AG04449 (cell line): ENCODE measurements at regions of chr11 and their contacts with region 1.

Region 1: GRCh38 chr11:33687733-33688479 is 12.7 kb downstream of the C11orf91 start:
- DNase-seq: no peak
- H3K4me3 ChIP-seq: no peak overlapping the region
- CTCF ChIP-seq: peak; percentile 63

Region 2: GRCh38 chr11:33161120-33162005 is 526.5 kb before region 1 on chr11 and contains the start of gene CSTF3:
- CTCF ChIA-PET with region 1: interaction called, 53 read pairs
- POLR2A ChIA-PET with region 1: interaction called, 3 read pairs
- DNase-seq: peak; percentile 80
- H3K4me3 ChIP-seq: peak within 1 kb of the TSS; percentile 96
- CTCF ChIP-seq: peak; percentile 50

Region 3: DNA sequence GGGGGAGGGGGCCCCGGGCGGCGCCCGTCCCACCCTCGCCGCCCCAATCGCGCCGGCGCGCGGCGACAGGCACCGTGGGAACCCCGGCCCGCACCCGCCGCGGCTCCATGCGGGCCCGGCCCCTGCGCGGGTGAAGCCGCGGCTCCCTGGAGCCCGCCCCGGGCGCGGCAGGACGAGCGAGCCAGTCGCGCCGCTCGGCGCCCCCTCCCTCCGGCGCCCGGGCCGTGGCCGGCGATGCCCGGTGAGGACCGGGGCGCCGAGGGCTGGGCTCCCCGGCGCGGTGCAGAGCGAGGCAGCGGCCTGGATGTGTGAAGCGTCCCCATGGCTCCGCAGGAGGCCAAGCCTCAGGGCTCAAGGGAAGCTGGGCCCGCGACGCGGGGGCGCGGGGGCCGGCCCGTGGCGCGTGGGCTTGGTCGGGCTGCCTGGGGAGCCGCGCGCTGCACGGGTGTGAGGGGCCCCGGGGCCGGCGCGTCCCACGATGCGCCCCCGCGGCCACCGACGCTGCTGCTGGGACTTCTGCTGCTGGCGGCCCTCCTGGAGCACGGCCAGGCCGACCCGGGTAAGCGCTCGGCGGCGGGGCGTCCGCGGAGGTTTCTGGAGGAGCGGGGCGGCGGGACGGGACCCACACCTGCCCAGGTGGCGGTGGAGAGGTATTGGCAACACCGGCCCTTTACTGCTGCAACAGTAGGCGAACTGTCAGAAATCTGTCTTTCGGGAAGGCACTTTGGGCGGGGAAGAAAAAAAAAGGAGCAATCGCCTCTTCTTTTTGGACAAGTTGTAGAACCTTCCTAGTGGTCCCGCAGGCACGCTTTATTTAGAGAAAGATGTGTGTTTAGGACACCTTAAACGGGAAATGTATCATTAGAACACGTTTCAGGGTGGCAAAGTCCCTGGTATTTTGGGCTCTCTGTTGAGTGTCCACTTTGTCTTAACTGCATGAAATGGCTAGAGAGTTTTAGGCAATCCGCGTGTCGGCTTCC is 311.3 kb before region 1 on chr11:
- CTCF ChIA-PET with region 1: interaction called, 20 read pairs
- POLR2A ChIA-PET with region 1: interaction called, 5 read pairs
- DNase-seq: no peak
- H3K4me3 ChIP-seq: peak overlapping the region; percentile 70
- CTCF ChIP-seq: no peak

Region 4: GRCh38 chr11:33670250-33671011 is 17.5 kb before region 1 on chr11:
- CTCF ChIA-PET with region 1: interaction called, 87 read pairs
- POLR2A ChIA-PET with region 1: interaction called, 3 read pairs
- DNase-seq: no peak
- H3K4me3 ChIP-seq: no peak overlapping the region
- CTCF ChIP-seq: no peak

Region 5: DNA sequence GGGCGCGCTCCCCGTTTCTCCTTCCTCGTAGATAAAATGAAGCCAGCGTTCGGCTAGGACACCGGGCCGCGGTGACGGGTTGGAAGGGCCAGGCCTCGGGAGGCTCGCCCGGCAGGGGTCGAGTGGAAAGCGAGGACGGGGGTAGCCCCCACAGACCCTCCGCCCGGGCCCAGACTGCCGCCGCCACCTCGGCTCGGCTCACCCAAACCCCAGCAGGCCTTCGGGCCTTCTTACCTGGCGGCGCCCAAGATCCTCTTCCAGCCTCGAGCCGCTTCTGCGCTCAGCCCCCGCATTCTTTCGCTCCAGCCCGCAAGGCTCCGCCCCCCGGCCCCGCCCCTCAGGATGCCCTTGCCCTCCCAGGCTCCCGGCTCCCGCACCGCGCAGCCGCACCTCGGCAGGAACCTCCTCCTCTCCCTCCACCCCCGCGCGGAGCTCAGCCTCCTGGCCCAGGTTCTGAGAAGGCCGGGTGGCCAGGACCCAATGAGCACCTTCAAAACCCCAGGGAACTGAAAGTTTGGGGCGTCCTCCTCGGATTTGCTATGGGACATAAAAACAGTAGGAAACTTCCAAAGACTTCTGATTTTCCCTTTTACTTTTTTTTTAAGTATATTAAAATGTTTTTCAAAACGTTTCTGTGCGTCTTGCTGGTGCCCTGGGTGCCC is 48.4 kb after region 1 on chr11 and contains the start of gene CD59:
- CTCF ChIA-PET with region 1: interaction called, 110 read pairs
- POLR2A ChIA-PET with region 1: interaction called, 16 read pairs
- DNase-seq: peak; percentile 41
- H3K4me3 ChIP-seq: peak within 1 kb of the TSS; percentile 79
- CTCF ChIP-seq: no peak

Region 6: DNA sequence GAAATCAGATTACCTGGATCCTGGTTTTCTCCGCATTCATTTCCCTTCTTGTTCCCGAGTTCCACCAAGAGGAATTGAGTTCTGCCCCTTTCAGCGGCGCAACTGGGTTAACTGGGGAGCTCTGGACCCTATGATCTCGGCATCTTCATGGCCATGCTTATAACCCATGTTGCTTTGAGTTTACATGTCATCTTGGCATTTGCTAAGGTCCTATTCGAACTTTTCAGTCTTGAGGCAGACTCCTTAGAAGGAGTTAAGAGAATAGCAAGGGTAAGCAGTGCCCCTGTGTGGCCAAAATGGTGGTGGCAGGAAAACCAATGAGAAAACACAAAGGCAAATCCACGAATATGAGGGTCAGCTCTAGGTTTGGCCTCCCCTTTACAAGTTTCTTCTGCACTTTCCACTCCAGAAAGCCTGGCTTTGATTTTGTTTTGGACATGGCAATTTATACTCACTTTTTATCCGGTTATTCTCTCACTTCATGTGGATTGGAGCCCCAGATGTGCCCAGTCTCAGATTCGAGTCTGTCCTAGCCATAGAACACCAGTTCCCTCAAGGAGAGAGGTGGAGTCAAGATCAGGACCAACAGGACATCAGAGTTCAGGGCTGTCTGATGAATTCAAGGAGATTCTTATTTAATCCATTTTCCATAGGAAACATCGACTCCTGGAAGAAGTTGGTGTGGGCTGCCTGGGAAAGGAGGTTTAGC is 141.7 kb after region 1 on chr11:
- CTCF ChIA-PET with region 1: interaction called, 13 read pairs
- POLR2A ChIA-PET with region 1: no interaction called
- DNase-seq: peak; percentile 12
- H3K4me3 ChIP-seq: peak overlapping the region; percentile 53
- CTCF ChIP-seq: peak; percentile 73